Sigmoid colon (tissue), 7 donors: ENCODE measurements at regions of chr7 and their contacts with region 1.

Region 1: GRCh38 chr7:75966190-75966961 is 28.0 kb downstream of the TMEM120A start:
- DNase-seq: peak; percentile 94
- H3K4me3 ChIP-seq: peak overlapping the region in 3 of 4 donors; percentile 31 to 37 (median 37)
- H3K27ac ChIP-seq: peak overlapping the region; percentile 84 to 95 (median 94)
- H3K4me1 ChIP-seq: peaks cover 0 to 74% (median 61%) of the 10 kb centered on the region in 4 donors
- H3K27me3 ChIP-seq: no peaks in the 10 kb centered on the region
- CTCF ChIP-seq: peak in 1 of 4 experiments; percentile 7
- EP300 ChIP-seq: peak; percentile 69 to 96 (median 91)
- POLR2A ChIP-seq: no peak

Region 2: GRCh38 chr7:75738987-75739795 is 227.2 kb before region 1 on chr7:
- intact Hi-C with region 1: loop called (anchors 10 kb)
- DNase-seq: peak; percentile 100
- H3K4me3 ChIP-seq: peak overlapping the region; percentile 78 to 99 (median 92)
- H3K27ac ChIP-seq: peak overlapping the region; percentile 90 to 94 (median 92)
- H3K4me1 ChIP-seq: peaks cover 0 to 21% (median 16%) of the 10 kb centered on the region in 4 donors
- H3K27me3 ChIP-seq: no peaks in the 10 kb centered on the region
- CTCF ChIP-seq: peak in 2 of 4 experiments; percentile 11 to 23
- EP300 ChIP-seq: no peak
- POLR2A ChIP-seq: peak in 1 of 2 donors; percentile 20

Region 3: GRCh38 chr7:75795831-75796285 is 170.5 kb before region 1 on chr7:
- intact Hi-C with region 1: no loop called
- DNase-seq: peak; percentile 81
- H3K4me3 ChIP-seq: no peak overlapping the region
- H3K27ac ChIP-seq: peak overlapping the region in 3 of 4 donors; percentile 18 to 45 (median 44)
- H3K4me1 ChIP-seq: peaks cover 0 to 13% (median 8%) of the 10 kb centered on the region in 4 donors
- H3K27me3 ChIP-seq: no peaks in the 10 kb centered on the region
- CTCF ChIP-seq: no peak
- EP300 ChIP-seq: peak in 1 of 4 donors; percentile 68
- POLR2A ChIP-seq: no peak

Region 4: GRCh38 chr7:75878769-75879611 is 87.4 kb before region 1 on chr7 and contains the start of gene RHBDD2:
- intact Hi-C with region 1: loop called (anchors 2 kb)
- DNase-seq: peak; percentile 98
- H3K4me3 ChIP-seq: peak within 1 kb of the TSS; percentile 66 to 85 (median 76)
- H3K27ac ChIP-seq: peak within 1 kb of the TSS; percentile 70 to 85 (median 83)
- H3K4me1 ChIP-seq: peaks cover 0 to 23% (median 16%) of the 10 kb centered on the region in 4 donors
- H3K27me3 ChIP-seq: no peaks in the 10 kb centered on the region
- CTCF ChIP-seq: peak in 1 of 4 experiments; percentile 25
- EP300 ChIP-seq: no peak
- POLR2A ChIP-seq: peak; percentile 92 to 94
- total RNA-seq, gene RHBDD2: 14.3 to 31.9 (median 27.0) TPM

Region 5: DNA sequence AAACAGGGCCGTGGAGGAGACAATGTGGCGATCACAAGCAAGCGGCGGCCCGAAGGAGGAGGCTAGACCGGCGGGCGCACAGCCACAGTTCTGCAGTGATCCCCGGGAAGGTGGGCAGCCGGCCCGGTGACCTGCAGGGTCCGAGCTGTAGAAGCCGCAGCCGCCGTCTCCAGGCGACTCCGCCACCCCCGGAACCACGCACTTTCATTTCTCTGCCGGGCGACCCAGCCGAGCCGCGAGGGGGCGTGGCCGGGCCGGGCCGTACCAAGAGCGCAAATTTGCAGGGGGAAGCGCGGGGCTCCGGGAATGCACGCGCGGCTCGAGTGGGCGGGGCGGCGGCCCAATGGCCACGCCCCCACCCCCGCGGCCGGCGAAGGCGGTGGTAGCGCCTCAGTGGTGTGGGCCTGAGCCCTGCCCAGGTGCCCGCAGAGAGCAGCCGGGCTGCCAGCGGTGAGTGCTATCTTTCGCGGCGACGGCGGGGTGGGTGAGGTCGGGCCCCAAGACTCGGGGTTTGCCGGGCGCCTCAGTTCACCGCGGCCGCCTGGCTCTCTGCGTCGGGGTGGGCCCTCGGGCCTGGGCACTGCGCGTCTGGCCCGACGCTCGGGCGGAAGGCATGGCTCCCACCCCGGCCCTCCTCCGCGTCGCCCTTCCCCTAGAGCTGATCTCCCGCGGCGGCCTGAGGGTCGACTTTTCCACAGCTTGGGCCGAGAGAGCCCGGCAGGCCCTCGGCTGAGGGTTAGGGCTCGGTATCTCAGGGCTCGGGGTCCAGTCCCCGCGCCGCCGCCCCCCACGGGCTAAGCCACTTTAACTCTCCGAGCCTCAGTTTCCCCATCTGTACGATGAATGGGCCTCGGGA is 51.4 kb before region 1 on chr7 and contains the start of gene POR:
- intact Hi-C with region 1: loop called (anchors 1 kb)
- DNase-seq: peak; percentile 97
- H3K4me3 ChIP-seq: peak within 1 kb of the TSS; percentile 86 to 100 (median 88)
- H3K27ac ChIP-seq: peak within 1 kb of the TSS; percentile 89 to 95 (median 92)
- H3K4me1 ChIP-seq: peaks cover 0 to 35% (median 22%) of the 10 kb centered on the region in 4 donors
- H3K27me3 ChIP-seq: no peaks in the 10 kb centered on the region
- CTCF ChIP-seq: no peak
- EP300 ChIP-seq: no peak
- POLR2A ChIP-seq: peak; percentile 88 to 97
- total RNA-seq, gene POR: 33.2 to 47.4 (median 39.2) TPM

Region 6: DNA sequence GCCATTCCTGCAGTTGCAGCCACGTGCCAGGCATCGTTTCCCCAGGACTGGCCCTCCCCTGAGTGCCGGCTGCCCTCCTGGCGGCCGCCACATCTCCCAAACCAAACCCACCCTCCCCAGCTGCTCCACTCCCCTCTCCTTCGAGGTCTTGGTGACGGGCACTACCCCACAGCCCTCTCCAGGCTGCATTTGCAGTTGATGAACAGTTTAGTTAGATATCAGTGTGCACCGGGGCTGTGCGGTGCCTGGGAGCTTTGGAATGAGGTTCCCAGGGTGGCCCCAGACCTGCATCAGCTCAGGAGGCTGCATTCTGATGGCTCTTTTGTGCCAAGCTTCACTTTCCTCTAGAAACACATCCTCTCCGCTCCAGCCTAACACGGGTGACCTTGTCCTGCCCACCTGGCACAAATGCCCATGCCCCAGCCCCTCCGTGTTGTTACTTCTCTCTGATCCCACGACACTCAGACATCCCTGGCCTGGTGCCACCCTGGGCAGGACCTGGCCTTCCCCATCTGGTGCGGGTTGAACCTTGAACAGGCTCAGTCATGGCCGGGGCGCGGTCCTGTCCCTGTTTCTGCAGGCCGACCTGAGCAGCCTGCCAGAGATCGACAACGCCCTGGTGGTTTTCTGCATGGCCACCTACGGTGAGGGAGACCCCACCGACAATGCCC is 13.5 kb after region 1 on chr7:
- intact Hi-C with region 1: no loop called
- DNase-seq: no peak
- H3K4me3 ChIP-seq: no peak overlapping the region
- H3K27ac ChIP-seq: no peak overlapping the region
- H3K4me1 ChIP-seq: peaks cover 0 to 6% (median 2%) of the 10 kb centered on the region in 4 donors
- H3K27me3 ChIP-seq: no peaks in the 10 kb centered on the region
- CTCF ChIP-seq: no peak
- EP300 ChIP-seq: no peak
- POLR2A ChIP-seq: no peak

Region 7: GRCh38 chr7:75994388-75995051 is 28.1 kb after region 1 on chr7 and contains the start of gene TMEM120A:
- intact Hi-C with region 1: loop called (anchors 2 kb)
- DNase-seq: peak; percentile 99
- H3K4me3 ChIP-seq: peak within 1 kb of the TSS; percentile 73 to 97 (median 86)
- H3K27ac ChIP-seq: peak within 1 kb of the TSS; percentile 95 to 99 (median 98)
- H3K4me1 ChIP-seq: peaks cover 0 to 30% (median 24%) of the 10 kb centered on the region in 4 donors
- H3K27me3 ChIP-seq: no peaks in the 10 kb centered on the region
- CTCF ChIP-seq: peak in 1 of 4 experiments; percentile 26
- EP300 ChIP-seq: peak in 1 of 4 donors; percentile 6
- POLR2A ChIP-seq: peak; percentile 88 to 90
- total RNA-seq, gene TMEM120A: 18.3 to 49.0 (median 35.9) TPM

Region 8: GRCh38 chr7:76314042-76314721 is 347.8 kb after region 1 on chr7:
- intact Hi-C with region 1: loop called (anchors 5 kb)
- DNase-seq: peak; percentile 98
- H3K4me3 ChIP-seq: no peak overlapping the region
- H3K27ac ChIP-seq: peak overlapping the region in 3 of 4 donors; percentile 1 to 59 (median 35)
- H3K4me1 ChIP-seq: peaks cover 0 to 36% (median 27%) of the 10 kb centered on the region in 4 donors
- H3K27me3 ChIP-seq: no peaks in the 10 kb centered on the region
- CTCF ChIP-seq: peak; percentile 100
- EP300 ChIP-seq: no peak
- POLR2A ChIP-seq: no peak

Region 9: GRCh38 chr7:77685233-77685632 is 1718.9 kb after region 1 on chr7:
- intact Hi-C with region 1: loop called (anchors 5 kb)
- DNase-seq: no peak
- H3K4me3 ChIP-seq: no peak overlapping the region
- H3K27ac ChIP-seq: peak overlapping the region; percentile 57 to 67 (median 60)
- H3K4me1 ChIP-seq: peaks cover 0 to 41% (median 27%) of the 10 kb centered on the region in 4 donors
- H3K27me3 ChIP-seq: no peaks in the 10 kb centered on the region
- CTCF ChIP-seq: no peak
- EP300 ChIP-seq: peak in 1 of 4 donors; percentile 53
- POLR2A ChIP-seq: no peak